Heart right ventricle (tissue), 16 donors: ENCODE measurements at regions of chr1 and their contacts with region 1.

Region 1: DNA sequence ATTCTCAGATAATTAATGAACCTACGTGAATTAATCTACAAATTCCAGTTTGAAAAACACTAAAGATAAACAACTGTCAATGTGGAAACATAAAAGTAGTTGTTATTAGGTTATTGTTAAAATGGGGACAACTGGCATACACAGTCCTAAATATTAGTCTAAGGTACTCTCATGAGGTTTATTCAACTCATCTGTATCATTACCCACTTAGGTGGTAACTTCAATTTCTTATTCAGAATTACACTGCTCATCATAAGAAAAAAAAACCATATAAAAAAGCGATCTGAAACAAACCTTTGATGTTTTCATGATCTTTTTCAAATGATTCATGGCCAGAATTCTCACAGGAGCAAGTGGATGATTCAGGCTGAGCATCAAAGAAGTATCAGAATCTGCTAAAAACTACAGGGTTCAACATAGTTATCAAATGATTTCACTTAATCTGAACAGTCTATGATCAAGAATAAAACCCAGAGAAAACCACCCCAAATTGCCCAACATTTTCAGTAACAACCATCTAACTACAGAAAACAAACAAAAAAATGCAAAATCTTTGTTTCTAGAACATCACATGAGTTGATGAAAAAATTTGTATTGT is 13.7 kb downstream of the HEATR1 start:
- DNase-seq: no peak
- ATAC-seq: no peak
- H3K4me3 ChIP-seq: no peak overlapping the region
- H3K27ac ChIP-seq: no peak overlapping the region
- H3K4me1 ChIP-seq: no peaks in the 10 kb centered on the region
- H3K27me3 ChIP-seq: no peaks in the 10 kb centered on the region
- CTCF ChIP-seq: no peak

Region 2: DNA sequence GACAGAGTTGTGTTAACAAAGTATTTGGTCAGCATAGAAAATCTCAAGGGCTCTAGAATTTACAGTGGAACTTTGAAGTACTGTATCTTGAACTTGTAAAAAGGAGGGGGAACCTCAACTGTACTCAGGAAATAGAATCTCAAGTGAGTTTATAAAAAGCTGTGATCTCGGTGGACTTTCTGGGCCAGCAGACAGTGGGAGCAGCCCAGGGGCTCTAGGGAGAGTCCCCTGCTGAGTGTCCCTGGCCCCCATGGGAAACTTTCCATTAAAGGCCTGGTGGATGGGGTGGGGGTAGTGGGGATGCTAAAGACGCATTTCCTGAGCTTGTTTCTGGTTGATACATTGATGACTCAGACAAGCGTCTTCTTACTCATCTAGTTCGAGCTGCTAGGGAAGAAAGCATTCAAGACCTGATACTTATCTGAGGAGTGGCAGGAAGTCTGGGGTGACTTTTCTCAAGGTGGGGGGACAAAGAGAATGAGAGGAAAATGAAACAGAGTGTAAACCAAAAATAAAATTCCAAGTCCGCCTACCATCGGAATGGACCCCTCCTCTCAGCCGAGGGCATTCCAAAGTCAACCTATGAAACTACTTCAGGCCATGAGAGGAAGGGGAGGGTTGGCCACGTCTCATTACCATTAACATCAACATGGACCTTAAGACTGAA is 591.3 kb before region 1 on chr1:
- intact Hi-C with region 1: loop called in 1 of 10 experiments (anchors 5 kb)
- DNase-seq: peak in 1 of 2 donors; percentile 62
- ATAC-seq: peak; percentile 33 to 79 (median 76)
- H3K4me3 ChIP-seq: no peak overlapping the region
- H3K27ac ChIP-seq: peak overlapping the region in 8 of 10 donors; percentile 9 to 86 (median 65)
- H3K4me1 ChIP-seq: peaks cover 0 to 41% (median 21%) of the 10 kb centered on the region in 9 donors
- H3K27me3 ChIP-seq: no peaks in the 10 kb centered on the region
- CTCF ChIP-seq: no peak

Region 3: DNA sequence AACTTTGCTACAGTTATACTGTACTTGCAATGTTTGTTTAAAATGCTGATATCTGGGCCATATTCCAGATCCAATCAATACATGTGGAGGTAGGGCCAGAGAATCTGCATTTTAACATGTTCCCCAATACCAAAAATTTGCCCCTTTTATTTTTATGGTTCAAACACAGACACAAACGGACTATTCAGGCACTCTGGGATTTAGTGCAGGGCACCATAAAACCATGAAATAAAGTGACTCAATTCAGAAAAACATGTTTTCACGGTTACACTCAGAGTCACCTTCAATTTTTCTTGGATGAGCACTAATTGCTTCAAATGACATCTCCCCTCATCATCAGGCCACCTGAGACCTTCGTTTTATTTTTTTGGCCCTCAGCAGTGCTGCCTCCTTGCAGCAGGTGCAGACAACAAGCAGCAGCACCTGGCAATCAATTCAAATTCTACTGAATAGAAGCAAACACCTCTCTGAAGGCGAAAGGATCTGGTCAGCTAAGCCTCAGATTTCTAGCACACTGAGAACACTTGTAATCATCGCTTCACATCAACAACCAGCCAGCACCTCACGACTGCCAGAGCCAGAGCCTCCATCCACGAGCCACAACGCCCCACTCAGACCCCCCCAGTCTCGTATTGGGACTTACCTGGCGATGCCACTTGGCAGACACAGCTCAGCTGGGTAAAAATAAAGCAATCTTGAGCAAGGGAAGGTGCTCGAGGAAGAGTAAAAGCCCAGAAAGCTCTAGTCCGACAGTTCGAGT is 310.0 kb before region 1 on chr1:
- intact Hi-C with region 1: no loop called
- DNase-seq: peak in 1 of 2 donors; percentile 8
- ATAC-seq: no peak
- H3K4me3 ChIP-seq: peak overlapping the region; percentile 69 to 99 (median 94)
- H3K27ac ChIP-seq: peak overlapping the region in 8 of 10 donors; percentile 84 to 90 (median 87)
- H3K4me1 ChIP-seq: peaks cover 0 to 28% (median 13%) of the 10 kb centered on the region in 9 donors
- H3K27me3 ChIP-seq: no peaks in the 10 kb centered on the region
- CTCF ChIP-seq: no peak